AG04449 (cell line): ENCODE measurements at regions of chr17 and their contacts with region 1.

Region 1: DNA sequence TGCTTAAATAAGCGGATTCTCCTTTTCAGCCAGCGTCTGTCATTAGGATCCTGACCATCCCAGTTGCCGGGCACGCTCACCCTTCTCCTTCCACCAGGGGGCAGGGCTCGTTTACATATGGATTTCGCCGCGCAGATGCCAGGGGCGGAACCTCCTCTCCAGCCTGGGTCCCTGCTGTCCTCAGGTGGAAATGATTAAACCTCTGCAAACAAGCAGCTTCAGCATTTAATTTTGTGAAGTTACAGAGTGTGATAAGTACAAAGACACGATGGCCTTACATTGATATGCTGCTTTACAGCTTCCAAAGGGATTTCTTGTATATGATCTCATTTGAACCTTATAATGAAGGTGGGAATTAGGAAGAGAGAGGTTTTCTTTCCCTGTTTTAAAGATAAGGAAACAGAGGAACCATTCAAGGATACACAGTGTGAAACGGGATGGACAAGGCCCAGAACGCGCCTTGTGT is 3.9 kb upstream of the KRT28 start:
- DNase-seq: no peak
- H3K4me3 ChIP-seq: no peak overlapping the region
- CTCF ChIP-seq: peak; percentile 92

Region 2: GRCh38 chr17:40791787-40792436 is 11.7 kb before region 1 on chr17:
- CTCF ChIA-PET with region 1: interaction called, 43 read pairs
- POLR2A ChIA-PET with region 1: no interaction called
- DNase-seq: no peak
- H3K4me3 ChIP-seq: no peak overlapping the region
- CTCF ChIP-seq: peak; percentile 48

Region 3: GRCh38 chr17:40818733-40819527 is 15.3 kb after region 1 on chr17:
- CTCF ChIA-PET with region 1: interaction called, 10 read pairs
- POLR2A ChIA-PET with region 1: no interaction called
- DNase-seq: no peak
- H3K4me3 ChIP-seq: peak overlapping the region; percentile 71
- CTCF ChIP-seq: no peak

Region 4: GRCh38 chr17:41060052-41060604 is 256.5 kb after region 1 on chr17 and contains the start of gene KRTAP2-3:
- CTCF ChIA-PET with region 1: no interaction called
- POLR2A ChIA-PET with region 1: no interaction called
- DNase-seq: peak; percentile 95
- H3K4me3 ChIP-seq: peak within 1 kb of the TSS; percentile 15
- CTCF ChIP-seq: no peak

Region 5: DNA sequence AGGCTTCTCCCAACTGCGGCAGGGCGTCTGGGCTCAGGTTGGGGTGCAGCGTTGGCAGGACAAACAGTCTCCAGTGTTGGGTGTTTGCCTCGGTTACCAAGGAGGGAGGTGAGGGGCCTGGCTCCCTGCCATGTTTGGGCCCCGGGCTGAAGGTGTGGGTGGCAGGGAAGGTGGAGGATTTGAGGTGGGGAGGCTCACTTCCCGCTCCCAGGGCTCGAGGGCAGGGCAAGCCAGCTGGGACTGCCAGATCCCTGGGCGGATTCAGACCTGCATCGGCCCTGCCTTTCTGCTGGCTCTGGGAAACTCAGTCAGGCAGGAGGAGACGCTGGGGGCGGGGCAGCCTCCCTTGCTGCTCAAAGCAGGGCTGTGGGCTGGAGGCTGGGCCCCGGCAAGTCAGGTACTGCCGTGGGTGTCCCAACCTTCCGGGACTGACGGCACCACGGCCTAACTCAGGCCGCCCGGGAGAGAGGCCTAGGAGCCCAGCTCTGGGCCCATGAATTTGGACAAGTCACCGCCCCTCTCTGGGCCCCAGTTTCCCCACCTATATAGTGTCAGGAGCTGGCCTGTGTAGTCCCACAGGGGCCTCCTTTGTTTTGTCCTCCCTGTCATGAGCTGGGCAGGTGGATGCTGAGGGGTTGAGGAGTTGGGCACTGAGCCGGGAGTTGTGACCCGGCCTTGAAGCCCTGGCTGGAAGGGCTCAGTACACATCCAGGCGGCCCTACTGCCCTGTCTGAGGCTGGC is 852.1 kb after region 1 on chr17:
- CTCF ChIA-PET with region 1: interaction called, 325 read pairs
- POLR2A ChIA-PET with region 1: no interaction called
- DNase-seq: no peak
- H3K4me3 ChIP-seq: no peak overlapping the region
- CTCF ChIP-seq: no peak